ENCODE measurements at regions of chr7 and their contacts with region 1.

Region 1: GRCh38 chr7:122092964-122093797 is 50.9 kb downstream of the AASS start:
- DNase-seq: peak; percentile 61
- ATAC-seq: peak; percentile 77
- H3K4me3 ChIP-seq: no peak overlapping the region
- H3K27ac ChIP-seq: no peak overlapping the region
- H3K4me1 ChIP-seq: no peaks in the 10 kb centered on the region
- H3K27me3 ChIP-seq: no peaks in the 10 kb centered on the region
- CTCF ChIP-seq: peak; percentile 50 to 91 (median 90)
- POLR2A ChIP-seq: no peak
- RAD21 ChIP-seq: peak; percentile 73

Region 2: DNA sequence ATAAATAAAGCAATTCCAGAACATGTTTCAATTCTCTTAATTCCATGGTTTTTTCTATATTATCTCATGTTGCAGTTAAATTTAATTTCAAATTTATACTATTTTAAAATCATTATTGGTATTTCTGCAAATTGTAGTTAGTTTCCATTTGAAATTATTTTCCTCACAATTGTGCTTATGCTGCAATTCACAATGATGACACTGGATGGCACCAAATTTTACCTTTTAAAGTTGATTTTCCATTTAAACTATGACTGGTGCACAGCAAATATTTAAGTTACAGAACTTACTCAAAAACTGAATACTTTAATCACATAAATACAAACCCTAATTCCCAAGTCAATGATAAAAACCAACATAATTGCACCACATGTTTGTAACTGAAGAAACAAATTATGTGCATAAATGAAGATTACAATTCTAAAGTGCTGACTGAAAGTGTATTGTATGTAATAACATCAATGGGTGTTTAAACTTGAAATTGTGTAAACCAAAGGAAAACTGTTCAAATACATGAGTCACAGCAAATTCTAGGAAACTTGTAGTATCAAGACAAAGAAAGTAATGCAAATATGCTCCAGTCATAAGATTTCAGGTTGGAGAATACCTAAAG is 126.2 kb after region 1 on chr7:
- CTCF ChIA-PET with region 1: interaction called, 7 read pairs
- POLR2A ChIA-PET with region 1: no interaction called
- RAD21 ChIA-PET with region 1: no interaction called
- intact Hi-C with region 1: loop called (anchors 5 kb)
- DNase-seq: peak; percentile 10
- ATAC-seq: no peak
- H3K4me3 ChIP-seq: no peak overlapping the region
- H3K27ac ChIP-seq: no peak overlapping the region
- H3K4me1 ChIP-seq: no peaks in the 10 kb centered on the region
- H3K27me3 ChIP-seq: no peaks in the 10 kb centered on the region
- CTCF ChIP-seq: peak; percentile 56 to 78 (median 72)
- POLR2A ChIP-seq: no peak
- RAD21 ChIP-seq: peak; percentile 82

Measured in HCT116 (cell line).